A549 (cell line): ENCODE measurements at regions of chr17 and their contacts with region 1.

Region 1: GRCh38 chr17:38982858-38983746 is 15.9 kb upstream of the FBXO47 start:
- DNase-seq: peak; percentile 79
- ATAC-seq: peak; percentile 86 to 88; a peak in 5 of 6 replicates
- H3K4me3 ChIP-seq: no peak overlapping the region
- H3K27ac ChIP-seq: no peak overlapping the region
- H3K4me1 ChIP-seq: no peaks in the 10 kb centered on the region
- CTCF ChIP-seq: peak; percentile 97
- EP300 ChIP-seq: no peak
- POLR2A ChIP-seq: no peak
- RAD21 ChIP-seq: peak; percentile 94 to 96

Region 2: GRCh38 chr17:38853292-38854219 is 129.5 kb before region 1 on chr17 and contains the start of gene RPL23:
- CTCF ChIA-PET with region 1: no interaction called
- POLR2A ChIA-PET with region 1: interaction called, 10 read pairs
- DNase-seq: peak; percentile 93 to 99
- ATAC-seq: peak; percentile 91 to 95
- H3K4me3 ChIP-seq: peak within 1 kb of the TSS; percentile 87
- H3K27ac ChIP-seq: peak within 1 kb of the TSS; percentile 85 to 93
- H3K4me1 ChIP-seq: peaks cover 24% of the 10 kb centered on the region
- CTCF ChIP-seq: no peak
- EP300 ChIP-seq: no peak
- POLR2A ChIP-seq: peak; percentile 97
- RAD21 ChIP-seq: peak in 1 of 2 experiments; percentile 10; a peak in 1 of 5 replicates
- polyA plus RNA-seq, gene RPL23: 2,297 and 2,715 TPM in 2 replicates

Region 3: GRCh38 chr17:39001703-39002637 is 18.9 kb after region 1 on chr17:
- CTCF ChIA-PET with region 1: interaction called, 16 read pairs
- POLR2A ChIA-PET with region 1: no interaction called
- DNase-seq: peak in 1 of 2 experiments; percentile 33
- ATAC-seq: peak; percentile 45 to 63; a peak in 4 of 6 replicates
- H3K4me3 ChIP-seq: no peak overlapping the region
- H3K27ac ChIP-seq: no peak overlapping the region
- H3K4me1 ChIP-seq: no peaks in the 10 kb centered on the region
- CTCF ChIP-seq: no peak
- EP300 ChIP-seq: no peak
- POLR2A ChIP-seq: no peak
- RAD21 ChIP-seq: no peak

Region 4: GRCh38 chr17:39057701-39058206 is 74.7 kb after region 1 on chr17:
- CTCF ChIA-PET with region 1: interaction called, 20 read pairs
- POLR2A ChIA-PET with region 1: no interaction called
- DNase-seq: no peak
- ATAC-seq: no peak
- H3K4me3 ChIP-seq: no peak overlapping the region; the same call in 1 of the 3 replicates
- H3K27ac ChIP-seq: peak overlapping the region in 1 of 2 experiments; percentile 89; a peak in 3 of 6 replicates
- H3K4me1 ChIP-seq: no peaks in the 10 kb centered on the region
- CTCF ChIP-seq: no peak
- EP300 ChIP-seq: no peak
- POLR2A ChIP-seq: no peak
- RAD21 ChIP-seq: no peak

Region 5: GRCh38 chr17:39164675-39165143 is 181.6 kb after region 1 on chr17:
- CTCF ChIA-PET with region 1: interaction called, 35 read pairs
- POLR2A ChIA-PET with region 1: no interaction called
- DNase-seq: peak; percentile 91 to 99
- ATAC-seq: peak; percentile 81 to 92
- H3K4me3 ChIP-seq: peak overlapping the region; percentile 16; the same call in 2 of the 3 replicates
- H3K27ac ChIP-seq: peak overlapping the region in 1 of 2 experiments; percentile 51; a peak in 3 of 6 replicates
- H3K4me1 ChIP-seq: peaks cover 6% of the 10 kb centered on the region; the same call in 2 of the 3 replicates
- CTCF ChIP-seq: peak; percentile 84
- EP300 ChIP-seq: no peak
- POLR2A ChIP-seq: no peak
- RAD21 ChIP-seq: peak; percentile 42 to 61; a peak in 3 of 5 replicates

Region 6: GRCh38 chr17:39213852-39214251 is 230.8 kb after region 1 on chr17:
- CTCF ChIA-PET with region 1: no interaction called
- POLR2A ChIA-PET with region 1: no interaction called
- DNase-seq: peak; percentile 76
- ATAC-seq: peak; percentile 45 to 65; a peak in 5 of 6 replicates
- H3K4me3 ChIP-seq: no peak overlapping the region
- H3K27ac ChIP-seq: peak overlapping the region; percentile 37 to 51; a peak in 2 of 6 replicates
- H3K4me1 ChIP-seq: peaks cover 30% of the 10 kb centered on the region
- CTCF ChIP-seq: no peak
- EP300 ChIP-seq: no peak
- POLR2A ChIP-seq: no peak
- RAD21 ChIP-seq: no peak

Region 7: DNA sequence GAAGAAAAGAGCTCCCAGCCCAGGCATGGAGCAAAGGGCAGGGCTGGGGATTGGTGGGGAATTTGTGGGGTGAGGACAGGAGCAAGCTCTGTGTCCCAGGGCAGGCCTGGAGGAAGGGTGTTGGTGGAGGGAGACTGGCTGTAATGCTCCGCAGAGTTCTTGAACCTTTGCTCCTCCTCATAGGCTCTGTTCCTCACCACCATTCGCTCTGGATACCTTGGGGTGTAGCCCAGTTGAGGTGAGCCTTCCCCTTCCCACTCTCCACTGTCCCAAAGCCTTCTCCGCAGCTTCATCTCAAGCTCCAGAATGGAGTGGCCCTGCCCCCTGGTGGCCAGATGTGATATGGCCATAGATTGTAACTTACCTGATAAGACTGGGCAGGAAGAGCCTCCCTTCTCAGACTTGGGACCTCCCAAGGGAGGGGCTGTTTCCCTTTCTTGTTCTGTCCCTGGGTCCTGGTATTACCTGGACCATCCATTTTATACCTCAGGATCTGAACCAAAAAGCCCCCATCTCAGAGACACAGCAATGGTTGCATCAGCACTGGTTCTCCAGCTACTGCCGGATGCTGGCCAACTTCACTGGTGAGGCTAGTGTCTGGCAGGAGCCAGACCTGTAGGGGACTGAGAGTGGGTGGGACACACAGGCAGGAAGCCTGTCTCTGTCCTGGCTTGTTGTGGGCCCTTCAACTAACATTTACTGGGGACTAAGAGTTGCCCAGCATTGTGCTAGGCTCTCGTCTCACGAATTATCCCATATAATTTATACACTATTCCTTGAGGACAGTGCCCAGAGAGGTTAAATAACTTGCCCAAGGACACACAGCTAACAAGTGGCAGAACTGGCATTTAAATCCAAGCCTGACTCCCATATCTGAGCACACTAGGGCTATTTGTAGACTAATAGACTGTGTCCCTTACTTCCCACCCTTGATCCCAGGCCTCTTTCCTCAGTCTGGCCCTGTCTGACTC is 261.8 kb after region 1 on chr17:
- CTCF ChIA-PET with region 1: interaction called, 47 read pairs
- POLR2A ChIA-PET with region 1: no interaction called
- DNase-seq: peak; percentile 87 to 91
- ATAC-seq: peak; percentile 88 to 95
- H3K4me3 ChIP-seq: no peak overlapping the region
- H3K27ac ChIP-seq: no peak overlapping the region
- H3K4me1 ChIP-seq: peaks cover 9% of the 10 kb centered on the region; the same call in 1 of the 3 replicates
- CTCF ChIP-seq: peak; percentile 97
- EP300 ChIP-seq: no peak
- POLR2A ChIP-seq: no peak
- RAD21 ChIP-seq: peak; percentile 92 to 99